GM10248 (cell line): ENCODE measurements at regions of chr9 and their contacts with region 1.

Region 1: DNA sequence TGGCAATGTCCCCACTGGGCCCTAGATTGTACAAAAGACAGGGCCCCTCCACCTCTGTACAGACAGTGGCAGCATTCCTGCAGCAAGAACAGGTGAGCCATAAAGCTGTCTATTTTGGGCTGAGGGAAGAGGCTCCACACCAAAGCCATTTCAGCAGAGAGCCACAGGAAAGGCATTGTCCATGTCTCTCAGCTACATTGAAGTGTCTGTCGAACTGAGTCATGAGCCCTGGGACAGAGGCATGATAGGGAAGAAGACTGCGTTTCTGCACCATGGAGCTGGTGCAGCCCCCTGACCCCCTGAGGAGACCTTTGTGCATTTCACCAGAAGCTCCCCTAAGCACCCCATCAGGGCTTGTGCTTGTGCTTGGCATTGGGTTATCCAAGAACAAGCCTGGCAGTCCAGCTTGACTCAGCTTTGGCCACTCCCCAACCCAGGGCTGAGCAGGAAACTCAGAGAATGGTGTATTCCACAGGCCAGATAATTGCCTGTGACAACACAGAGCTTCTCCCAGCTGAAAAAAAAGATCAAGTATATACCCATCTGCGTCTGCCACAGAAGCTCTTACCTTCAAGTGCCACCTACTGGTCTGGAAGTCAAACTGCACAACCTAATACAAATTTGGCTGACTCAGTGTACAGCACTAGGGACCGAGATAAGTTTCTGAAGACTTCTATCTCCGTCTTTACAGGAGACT is 5.9 kb upstream of the FRMD3 start:
- DNase-seq: peak; percentile 63
- CTCF ChIP-seq: peak; percentile 71

Region 2: GRCh38 chr9:83327323-83327722 is 216.8 kb before region 1 on chr9:
- CTCF ChIA-PET with region 1: interaction called, 219 read pairs
- POLR2A ChIA-PET with region 1: no interaction called
- DNase-seq: no peak
- CTCF ChIP-seq: no peak

Region 3: DNA sequence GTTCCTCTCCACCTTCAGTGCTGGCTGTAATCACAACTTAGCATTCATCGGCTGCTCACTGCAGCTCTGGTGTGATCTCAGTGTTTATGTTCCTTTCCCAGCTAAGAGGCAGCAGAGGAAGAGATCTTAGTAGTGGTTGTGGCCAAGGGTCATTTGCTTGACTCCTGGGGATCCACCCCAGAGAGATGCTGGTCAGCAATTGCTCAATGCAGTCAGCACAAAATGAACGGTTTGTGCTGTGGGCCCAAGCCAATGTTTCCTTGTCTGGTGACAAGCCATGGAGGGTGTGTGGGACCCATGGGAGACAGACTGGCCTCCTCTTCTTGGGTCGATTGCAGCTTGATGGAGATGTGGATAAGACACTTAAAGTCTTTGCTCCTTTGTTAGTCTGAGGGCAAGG is 10.1 kb after region 1 on chr9:
- CTCF ChIA-PET with region 1: interaction called, 34 read pairs
- POLR2A ChIA-PET with region 1: no interaction called
- DNase-seq: no peak
- CTCF ChIP-seq: no peak

Region 4: GRCh38 chr9:83563360-83563759 is 19.2 kb after region 1 on chr9:
- CTCF ChIA-PET with region 1: interaction called, 20 read pairs
- POLR2A ChIA-PET with region 1: no interaction called
- DNase-seq: no peak
- CTCF ChIP-seq: no peak

Region 5: DNA sequence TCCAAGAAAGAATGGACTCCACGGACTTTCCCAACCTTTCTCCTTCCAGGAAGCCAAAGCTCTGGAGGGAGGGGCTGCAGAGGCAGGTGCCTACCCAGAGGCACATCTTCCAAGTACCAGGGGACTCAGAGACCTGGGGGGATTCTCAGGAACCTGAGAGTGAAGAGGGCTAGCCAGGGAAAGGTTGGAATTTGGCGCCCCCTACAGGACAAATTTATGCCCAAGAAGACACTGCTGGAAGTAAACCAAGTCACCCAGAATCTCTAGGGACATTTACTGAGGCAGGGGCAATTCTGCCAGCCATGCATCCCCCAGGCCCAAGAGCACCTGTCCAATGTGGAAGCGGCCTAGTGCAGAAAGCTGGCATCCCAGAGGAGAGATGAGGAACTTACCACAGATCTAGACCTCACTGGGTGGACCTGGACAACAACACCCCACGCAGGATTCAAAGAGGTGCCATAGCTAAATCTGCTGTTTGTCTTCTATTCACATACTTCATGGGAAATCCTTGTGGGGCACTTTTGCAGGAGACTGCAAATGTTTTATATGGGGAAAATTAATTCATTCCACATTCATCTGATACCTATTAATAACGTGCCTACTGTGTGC is 52.9 kb after region 1 on chr9:
- CTCF ChIA-PET with region 1: interaction called, 10 read pairs
- POLR2A ChIA-PET with region 1: no interaction called
- DNase-seq: peak; percentile 68
- CTCF ChIP-seq: peak; percentile 69